ENCODE measurements at regions of chr7 and their contacts with region 1.

Region 1: DNA sequence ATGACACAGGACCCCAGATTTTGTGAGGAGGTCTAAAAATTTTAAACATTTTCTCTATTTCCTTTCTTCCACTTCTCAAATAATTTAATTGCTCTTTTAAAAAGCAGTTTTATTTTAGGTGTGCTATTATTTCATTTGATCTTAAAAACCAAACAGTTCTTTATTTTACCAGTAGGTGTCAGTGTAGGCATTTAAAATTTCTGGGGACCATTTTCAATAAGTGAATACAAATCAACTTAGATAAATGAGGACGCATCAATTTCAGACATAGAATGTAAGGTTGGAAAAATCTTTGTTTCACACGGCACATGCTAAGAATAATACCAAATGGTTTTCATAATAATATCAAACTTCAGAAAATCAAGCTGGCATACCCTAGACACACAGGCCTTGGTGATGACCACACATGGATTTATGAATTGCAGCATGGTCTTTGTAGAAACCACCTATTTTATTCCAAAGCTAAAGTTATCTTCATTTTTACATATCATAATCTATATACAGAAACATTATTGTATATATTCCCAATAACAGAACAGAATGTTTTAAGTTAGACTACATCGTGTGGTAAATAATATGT is 127.6 kb upstream of the SLC26A5 start:
- DNase-seq: no peak
- H3K4me3 ChIP-seq: no peak overlapping the region
- H3K27ac ChIP-seq: no peak overlapping the region
- H3K4me1 ChIP-seq: no peaks in the 10 kb centered on the region
- H3K27me3 ChIP-seq: no peaks in the 10 kb centered on the region
- CTCF ChIP-seq: peak in 4 of 6 experiments; percentile 37 to 69 (median 66)
- POLR2A ChIP-seq: no peak

Region 2: GRCh38 chr7:103660455-103661371 is 87.1 kb after region 1 on chr7:
- intact Hi-C with region 1: no loop called
- DNase-seq: no peak
- H3K4me3 ChIP-seq: no peak overlapping the region
- H3K27ac ChIP-seq: peak overlapping the region in 1 of 3 donors; percentile 61
- H3K4me1 ChIP-seq: no peaks in the 10 kb centered on the region
- H3K27me3 ChIP-seq: no peaks in the 10 kb centered on the region
- CTCF ChIP-seq: no peak
- POLR2A ChIP-seq: no peak

Region 3: DNA sequence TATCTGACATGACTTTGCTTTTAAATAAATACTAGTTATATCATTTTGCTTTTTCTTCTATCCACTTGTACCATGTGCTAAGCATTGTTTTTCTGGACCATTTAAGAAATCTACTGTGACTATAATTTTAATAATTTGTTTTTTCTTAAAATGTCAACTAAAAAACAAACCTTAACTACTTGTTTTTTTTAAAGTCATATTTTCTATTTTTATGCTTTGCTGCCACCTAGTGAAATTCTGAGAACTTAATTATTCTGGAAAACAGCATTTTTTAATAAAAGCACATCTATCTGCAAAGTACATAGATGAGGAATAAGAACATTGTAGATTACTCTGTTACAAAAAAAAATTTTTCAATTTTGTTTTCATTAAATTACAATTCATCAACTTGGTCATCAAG is 586.8 kb after region 1 on chr7:
- intact Hi-C with region 1: loop called (anchors 5 kb)
- DNase-seq: no peak
- H3K4me3 ChIP-seq: no peak overlapping the region
- H3K27ac ChIP-seq: no peak overlapping the region
- H3K4me1 ChIP-seq: peaks cover 0 to 3% of the 10 kb centered on the region in 2 donors
- H3K27me3 ChIP-seq: no peaks in the 10 kb centered on the region
- CTCF ChIP-seq: peak in 5 of 6 experiments; percentile 17 to 79 (median 49)
- POLR2A ChIP-seq: no peak